Activated CD4-positive, alpha-beta T cell treated with anti-CD3 and anti-CD28 coated beads, Interleukin-2, amount 10 ng/mL, durations not matched to agents 24 days and 14 days (primary cell): ENCODE measurements at regions of chr10 and their contacts with region 1.

Region 1: DNA sequence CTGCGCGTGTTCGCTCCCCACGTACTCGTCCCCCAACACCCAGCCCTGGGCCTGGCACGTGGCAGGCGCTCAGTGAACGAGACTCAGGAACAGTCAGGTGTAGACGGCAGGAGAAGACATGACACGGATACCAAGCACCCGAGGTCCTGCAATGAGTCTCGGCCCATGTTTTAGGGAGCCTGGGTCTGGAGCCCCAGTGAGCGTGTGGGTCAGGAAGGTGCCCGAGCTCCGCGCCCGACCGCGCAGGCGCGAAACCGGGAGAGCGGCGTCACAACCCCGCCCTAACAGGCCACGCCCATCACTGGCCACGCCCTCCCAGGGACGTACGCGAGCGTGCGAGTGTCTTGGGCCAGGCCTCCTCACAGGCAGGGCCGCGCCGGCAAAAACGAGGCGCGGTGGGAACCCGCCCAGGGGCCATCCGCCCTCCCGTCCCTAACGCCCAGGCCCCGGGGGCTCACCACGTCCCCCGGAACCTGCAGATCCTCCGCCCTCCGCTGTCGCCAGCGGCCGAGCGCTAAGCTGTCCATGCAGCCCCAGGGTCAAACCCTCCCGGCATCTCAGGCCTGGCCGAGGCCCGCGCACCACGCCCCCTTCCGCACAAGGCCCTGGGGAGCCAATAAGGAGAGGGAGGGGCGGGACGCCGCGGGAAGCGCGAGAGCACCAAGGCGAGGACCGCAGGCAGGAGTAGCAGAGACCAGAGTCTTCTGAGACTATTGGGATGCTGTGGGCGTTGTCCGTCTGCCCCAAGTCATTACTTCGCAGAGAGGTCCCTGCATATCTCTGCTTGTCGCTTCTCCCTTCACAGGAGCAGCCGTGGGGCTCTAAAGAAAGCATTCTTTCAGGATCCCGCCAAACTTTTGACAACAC is at the start of gene C10orf143:
- DNase-seq: peak; percentile 100
- H3K4me3 Mint-ChIP-seq: peak within 1 kb of the TSS; percentile 89
- H3K27ac Mint-ChIP-seq: peak within 1 kb of the TSS; percentile 97
- H3K4me1 Mint-ChIP-seq: peaks cover 40% of the 10 kb centered on the region
- H3K27me3 Mint-ChIP-seq: no peaks in the 10 kb centered on the region
- total RNA-seq, gene C10orf143: 2.5 and 3.0 TPM in 2 replicates

Region 2: GRCh38 chr10:129466703-129467358 is 643.6 kb before region 1 on chr10 and contains the start of gene MGMT:
- intact Hi-C with region 1: loop called (anchors 2 kb)
- DNase-seq: peak; percentile 98
- H3K4me3 Mint-ChIP-seq: peak within 1 kb of the TSS; percentile 83
- H3K27ac Mint-ChIP-seq: peak within 1 kb of the TSS; percentile 79
- H3K4me1 Mint-ChIP-seq: peaks cover 5% of the 10 kb centered on the region
- H3K27me3 Mint-ChIP-seq: peaks cover 3% of the 10 kb centered on the region
- total RNA-seq, gene MGMT: 19.5 and 19.6 TPM in 2 replicates

Region 3: GRCh38 chr10:129978322-129978721 is 132.2 kb before region 1 on chr10:
- intact Hi-C with region 1: loop called (anchors 5 kb)
- DNase-seq: no peak
- H3K4me3 Mint-ChIP-seq: no peak overlapping the region
- H3K27ac Mint-ChIP-seq: no peak overlapping the region
- H3K4me1 Mint-ChIP-seq: no peaks in the 10 kb centered on the region
- H3K27me3 Mint-ChIP-seq: peaks cover 44% of the 10 kb centered on the region

Region 4: GRCh38 chr10:130136226-130137089 is 26.0 kb after region 1 on chr10 and contains the start of gene GLRX3:
- intact Hi-C with region 1: loop called (anchors 1 kb)
- DNase-seq: peak; percentile 97
- H3K4me3 Mint-ChIP-seq: peak within 1 kb of the TSS; percentile 94
- H3K27ac Mint-ChIP-seq: peak within 1 kb of the TSS; percentile 95
- H3K4me1 Mint-ChIP-seq: peaks cover 36% of the 10 kb centered on the region
- H3K27me3 Mint-ChIP-seq: peaks cover 14% of the 10 kb centered on the region
- total RNA-seq, gene GLRX3: 136 and 149 TPM in 2 replicates

Region 5: GRCh38 chr10:130179640-130180039 is 69.2 kb after region 1 on chr10:
- intact Hi-C with region 1: loop called (anchors 2 kb)
- DNase-seq: peak; percentile 86
- H3K4me3 Mint-ChIP-seq: no peak overlapping the region
- H3K27ac Mint-ChIP-seq: no peak overlapping the region
- H3K4me1 Mint-ChIP-seq: peaks cover 13% of the 10 kb centered on the region
- H3K27me3 Mint-ChIP-seq: no peaks in the 10 kb centered on the region

Region 6: GRCh38 chr10:130254662-130255061 is 144.2 kb after region 1 on chr10:
- intact Hi-C with region 1: no loop called
- DNase-seq: no peak
- H3K4me3 Mint-ChIP-seq: no peak overlapping the region
- H3K27ac Mint-ChIP-seq: no peak overlapping the region
- H3K4me1 Mint-ChIP-seq: no peaks in the 10 kb centered on the region
- H3K27me3 Mint-ChIP-seq: no peaks in the 10 kb centered on the region